Psoas muscle (tissue), 8 donors: ENCODE measurements at regions of chr4 and their contacts with region 1.

Region 1: GRCh38 chr4:163554870-163555465 is 60.5 kb downstream of the TMA16 start:
- DNase-seq: no peak
- ATAC-seq: no peak
- H3K4me3 ChIP-seq: no peak overlapping the region
- H3K27ac ChIP-seq: no peak overlapping the region
- H3K4me1 ChIP-seq: no peaks in the 10 kb centered on the region
- H3K27me3 ChIP-seq: peaks cover 0 to 3% (median 0%) of the 10 kb centered on the region in 3 donors
- CTCF ChIP-seq: peak; percentile 57

Region 2: DNA sequence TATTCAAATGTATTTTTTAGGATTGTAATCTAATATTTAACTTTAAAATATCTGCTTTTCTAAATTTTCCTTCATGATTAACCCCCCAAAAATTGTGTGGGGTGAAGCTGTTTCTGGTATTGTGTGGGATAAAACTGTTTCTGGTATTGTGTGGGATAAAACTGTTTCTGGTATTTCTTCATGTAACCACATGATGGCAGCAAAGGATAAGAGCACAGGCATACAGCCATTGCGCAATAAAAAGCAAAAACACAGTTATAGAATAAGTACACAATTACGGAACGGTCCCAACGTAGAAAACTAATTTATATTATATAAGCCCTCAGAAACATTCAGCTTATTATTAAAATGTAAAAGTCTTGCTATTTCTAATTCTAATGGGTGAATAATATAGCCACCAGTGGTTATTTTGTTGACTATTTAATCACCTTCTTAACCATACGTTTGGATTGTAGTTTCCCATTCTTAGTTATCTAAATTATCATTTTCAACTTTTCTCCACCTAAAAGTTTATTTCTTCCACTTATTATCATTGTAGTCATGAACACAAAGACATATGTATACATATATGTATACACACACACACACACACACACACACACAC is 1057.3 kb before region 1 on chr4:
- intact Hi-C with region 1: loop called in 1 of 2 experiments (anchors 10 kb)
- DNase-seq: no peak
- ATAC-seq: peak; percentile 67 to 80 (median 70)
- H3K4me3 ChIP-seq: peak overlapping the region; percentile 42
- H3K27ac ChIP-seq: no peak overlapping the region
- H3K4me1 ChIP-seq: no peaks in the 10 kb centered on the region
- H3K27me3 ChIP-seq: no peaks in the 10 kb centered on the region
- CTCF ChIP-seq: peak; percentile 85

Region 3: GRCh38 chr4:164731827-164732474 is 1177.0 kb after region 1 on chr4:
- intact Hi-C with region 1: loop called (anchors 5 kb)
- DNase-seq: no peak
- ATAC-seq: peak in 3 of 4 donors; percentile 53 to 72 (median 63)
- H3K4me3 ChIP-seq: no peak overlapping the region
- H3K27ac ChIP-seq: no peak overlapping the region
- H3K4me1 ChIP-seq: peaks cover 12% of the 10 kb centered on the region
- H3K27me3 ChIP-seq: no peaks in the 10 kb centered on the region
- CTCF ChIP-seq: peak; percentile 70

Region 4: DNA sequence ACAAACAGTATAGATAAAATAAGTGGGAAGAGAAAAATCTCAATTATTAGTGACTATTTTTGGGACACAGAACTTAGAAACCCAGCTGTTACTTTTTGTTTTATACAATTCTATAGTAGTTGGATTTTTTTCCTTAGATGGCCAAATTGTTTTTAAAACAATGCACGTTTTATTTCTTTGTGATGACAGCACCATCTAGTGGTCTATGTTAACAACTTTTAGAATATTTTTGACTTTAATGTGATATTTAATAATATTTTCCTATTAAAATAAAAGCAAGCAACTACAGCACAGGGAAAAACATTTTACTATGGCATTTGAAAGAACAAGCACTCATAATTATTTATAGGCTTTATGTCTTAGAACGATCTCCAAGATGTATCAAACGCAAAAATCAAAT is 1193.4 kb after region 1 on chr4:
- intact Hi-C with region 1: loop called in 1 of 2 experiments (anchors 5 kb)
- DNase-seq: no peak
- ATAC-seq: no peak
- H3K4me3 ChIP-seq: no peak overlapping the region
- H3K27ac ChIP-seq: no peak overlapping the region
- H3K4me1 ChIP-seq: no peaks in the 10 kb centered on the region
- H3K27me3 ChIP-seq: peaks cover 0 to 2% (median 0%) of the 10 kb centered on the region in 3 donors
- CTCF ChIP-seq: no peak

Region 5: DNA sequence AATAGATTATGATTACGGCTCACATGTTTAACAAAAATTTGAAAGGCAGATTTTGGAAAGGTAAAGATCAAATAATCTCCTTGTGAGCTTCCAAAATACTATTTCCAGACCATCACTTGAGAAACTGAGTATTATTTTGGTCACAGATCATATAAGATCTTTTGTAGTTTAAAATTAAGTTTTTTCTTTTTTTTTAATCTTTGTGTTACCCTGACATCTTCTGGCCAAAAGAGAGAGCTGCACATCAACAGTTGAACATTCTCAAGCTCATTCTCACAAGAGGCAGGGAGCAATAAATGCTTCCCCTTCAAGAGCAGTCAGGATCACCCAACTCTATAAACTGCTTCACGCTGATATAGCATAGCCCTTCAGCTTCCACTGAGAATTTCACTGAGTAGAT is 1541.8 kb after region 1 on chr4:
- intact Hi-C with region 1: loop called in 1 of 2 experiments (anchors 10 kb)
- DNase-seq: no peak
- ATAC-seq: no peak
- H3K4me3 ChIP-seq: no peak overlapping the region
- H3K27ac ChIP-seq: no peak overlapping the region
- H3K4me1 ChIP-seq: no peaks in the 10 kb centered on the region
- H3K27me3 ChIP-seq: no peaks in the 10 kb centered on the region
- CTCF ChIP-seq: peak; percentile 51